Psoas muscle (tissue), 8 donors: ENCODE measurements at regions of chr17 and their contacts with region 1.

Region 1: DNA sequence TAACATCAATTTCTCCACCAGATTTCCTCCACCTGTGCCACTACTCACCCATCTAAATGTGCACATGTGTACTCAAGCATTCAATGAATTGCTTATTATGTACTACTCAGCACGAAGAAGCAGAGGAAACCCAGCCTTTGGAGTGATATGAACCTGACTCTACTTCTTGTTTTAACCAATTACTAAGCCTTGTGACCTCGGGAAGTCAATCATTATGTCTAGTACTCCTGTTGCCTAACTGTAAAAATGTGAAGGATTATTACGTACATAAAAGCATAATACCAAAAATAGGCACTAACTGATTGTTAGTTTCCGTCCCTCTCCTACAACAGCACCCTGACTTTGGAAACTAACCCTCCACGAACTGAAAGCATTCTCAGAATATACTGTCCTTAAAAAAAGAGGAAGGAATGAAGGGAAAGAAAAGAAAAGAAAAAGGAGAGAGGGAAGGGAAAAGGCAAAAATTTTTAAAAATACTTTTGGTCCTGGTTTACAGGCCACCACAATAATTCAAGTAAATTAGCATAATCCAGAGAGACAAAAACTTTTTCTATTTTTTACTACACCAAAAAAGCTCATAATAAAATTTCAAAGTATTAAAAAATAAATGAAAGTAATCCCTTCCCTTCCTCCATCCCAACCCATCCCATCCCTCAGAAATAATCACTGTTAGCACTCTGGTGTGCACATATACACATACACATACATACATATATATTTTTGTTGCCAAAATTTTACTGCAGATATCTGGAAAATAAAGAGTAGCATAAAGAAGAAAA is 53.6 kb downstream of the KANSL1 start:
- DNase-seq: no peak
- ATAC-seq: peak; percentile 27 to 80 (median 62)
- H3K4me3 ChIP-seq: no peak overlapping the region
- H3K27ac ChIP-seq: peak overlapping the region; percentile 34
- H3K4me1 ChIP-seq: peaks cover 84% of the 10 kb centered on the region
- H3K27me3 ChIP-seq: no peaks in the 10 kb centered on the region
- CTCF ChIP-seq: no peak

Region 2: GRCh38 chr17:46152423-46152822 is 12.8 kb after region 1 on chr17:
- intact Hi-C with region 1: loop called in 1 of 2 experiments (anchors 2 kb)
- DNase-seq: no peak
- ATAC-seq: no peak
- H3K4me3 ChIP-seq: no peak overlapping the region
- H3K27ac ChIP-seq: peak overlapping the region; percentile 7
- H3K4me1 ChIP-seq: peaks cover 84% of the 10 kb centered on the region
- H3K27me3 ChIP-seq: no peaks in the 10 kb centered on the region
- CTCF ChIP-seq: no peak